ENCODE measurements at regions of chr5 and their contacts with region 1.

Region 1: DNA sequence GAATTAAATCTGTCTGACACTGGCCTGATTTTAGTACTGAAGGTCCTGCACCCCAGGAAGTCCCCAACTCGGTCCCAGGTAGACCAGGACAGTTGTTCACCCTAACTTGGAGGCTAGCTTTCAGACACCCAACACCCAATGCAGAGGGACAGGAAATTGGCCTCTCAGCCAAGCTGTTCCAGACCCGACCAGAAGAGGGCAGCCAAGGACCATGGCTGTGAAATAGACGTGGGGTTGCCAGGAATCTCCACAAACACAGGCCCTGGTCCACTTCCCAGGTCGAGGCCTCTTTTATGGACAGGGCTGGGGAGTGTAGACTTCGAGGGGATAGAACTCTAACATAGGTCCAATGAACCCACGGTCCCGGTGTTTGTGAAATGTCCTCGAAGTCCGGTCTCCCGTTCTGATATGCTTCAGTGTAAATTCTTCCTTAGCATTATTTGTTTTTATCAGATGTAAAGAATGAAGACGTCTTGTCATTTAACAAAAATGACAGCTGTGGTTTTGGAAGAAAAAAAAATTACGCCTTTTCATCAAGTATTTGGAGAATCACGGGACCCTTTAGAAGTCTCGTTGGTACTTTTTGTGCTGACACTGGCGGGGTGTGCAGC is 260.3 kb upstream of the ADAMTS16 start:
- DNase-seq: peak; percentile 78
- H3K4me3 Mint-ChIP-seq: no peak overlapping the region
- H3K27ac Mint-ChIP-seq: no peak overlapping the region
- H3K4me1 Mint-ChIP-seq: no peaks in the 10 kb centered on the region
- H3K27me3 Mint-ChIP-seq: peaks cover 9% of the 10 kb centered on the region
- CTCF ChIP-seq: peak; percentile 93

Region 2: GRCh38 chr5:4479426-4479825 is 400.4 kb before region 1 on chr5:
- CTCF ChIA-PET with region 1: no interaction called
- POLR2A ChIA-PET with region 1: no interaction called
- intact Hi-C with region 1: no loop called
- DNase-seq: no peak
- H3K4me3 Mint-ChIP-seq: no peak overlapping the region
- H3K27ac Mint-ChIP-seq: no peak overlapping the region
- H3K4me1 Mint-ChIP-seq: no peaks in the 10 kb centered on the region
- H3K27me3 Mint-ChIP-seq: no peaks in the 10 kb centered on the region
- CTCF ChIP-seq: no peak

Region 3: GRCh38 chr5:4941957-4942830 is 62.4 kb after region 1 on chr5:
- CTCF ChIA-PET with region 1: interaction called, 11 read pairs
- POLR2A ChIA-PET with region 1: no interaction called
- intact Hi-C with region 1: loop called (anchors 5 kb)
- DNase-seq: peak; percentile 14
- H3K4me3 Mint-ChIP-seq: no peak overlapping the region
- H3K27ac Mint-ChIP-seq: no peak overlapping the region
- H3K4me1 Mint-ChIP-seq: no peaks in the 10 kb centered on the region
- H3K27me3 Mint-ChIP-seq: no peaks in the 10 kb centered on the region
- CTCF ChIP-seq: peak; percentile 93

Region 4: GRCh38 chr5:5063533-5063953 is 183.7 kb after region 1 on chr5:
- CTCF ChIA-PET with region 1: interaction called, 4 read pairs
- POLR2A ChIA-PET with region 1: no interaction called
- intact Hi-C with region 1: loop called (anchors 5 kb)
- DNase-seq: peak; percentile 33
- H3K4me3 Mint-ChIP-seq: no peak overlapping the region
- H3K27ac Mint-ChIP-seq: no peak overlapping the region
- H3K4me1 Mint-ChIP-seq: peaks cover 8% of the 10 kb centered on the region
- H3K27me3 Mint-ChIP-seq: peaks cover 11% of the 10 kb centered on the region
- CTCF ChIP-seq: no peak

Region 5: DNA sequence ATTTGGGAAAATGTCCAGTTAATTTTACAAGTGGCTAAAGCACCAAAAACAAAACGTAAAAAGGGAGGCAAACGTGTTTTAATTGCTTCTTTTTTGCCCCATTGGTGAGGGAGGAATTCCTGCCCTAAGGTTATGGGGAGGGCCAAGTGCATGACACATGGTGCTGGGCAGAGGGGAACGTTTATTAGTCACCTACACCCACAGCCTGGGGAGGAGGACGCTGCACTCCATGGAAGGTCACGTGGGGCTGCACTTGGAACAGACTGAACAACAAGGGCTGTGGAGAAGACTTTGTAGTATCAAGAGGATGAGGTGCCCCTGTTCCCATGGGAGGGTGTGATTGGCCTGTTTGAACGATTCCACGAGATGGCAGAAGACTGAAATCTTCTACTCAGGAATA is 246.6 kb after region 1 on chr5:
- CTCF ChIA-PET with region 1: interaction called, 6 read pairs
- POLR2A ChIA-PET with region 1: no interaction called
- intact Hi-C with region 1: loop called (anchors 5 kb)
- DNase-seq: peak; percentile 95
- H3K4me3 Mint-ChIP-seq: no peak overlapping the region
- H3K27ac Mint-ChIP-seq: peak overlapping the region; percentile 46
- H3K4me1 Mint-ChIP-seq: peaks cover 12% of the 10 kb centered on the region
- H3K27me3 Mint-ChIP-seq: no peaks in the 10 kb centered on the region
- CTCF ChIP-seq: no peak

Region 6: GRCh38 chr5:5141625-5142532 is 262.1 kb after region 1 on chr5:
- CTCF ChIA-PET with region 1: interaction called, 6 read pairs
- POLR2A ChIA-PET with region 1: no interaction called
- intact Hi-C with region 1: loop called (anchors 1 kb)
- DNase-seq: peak; percentile 74
- H3K4me3 Mint-ChIP-seq: no peak overlapping the region
- H3K27ac Mint-ChIP-seq: no peak overlapping the region
- H3K4me1 Mint-ChIP-seq: no peaks in the 10 kb centered on the region
- H3K27me3 Mint-ChIP-seq: peaks cover 16% of the 10 kb centered on the region
- CTCF ChIP-seq: peak; percentile 78

Region 7: GRCh38 chr5:5340206-5340729 is 460.5 kb after region 1 on chr5:
- CTCF ChIA-PET with region 1: interaction called, 5 read pairs
- POLR2A ChIA-PET with region 1: no interaction called
- intact Hi-C with region 1: loop called (anchors 2 kb)
- DNase-seq: peak; percentile 97
- H3K4me3 Mint-ChIP-seq: peak overlapping the region; percentile 32
- H3K27ac Mint-ChIP-seq: peak overlapping the region; percentile 40
- H3K4me1 Mint-ChIP-seq: peaks cover 50% of the 10 kb centered on the region
- H3K27me3 Mint-ChIP-seq: no peaks in the 10 kb centered on the region
- CTCF ChIP-seq: peak; percentile 59

Region 8: GRCh38 chr5:5398046-5398445 is 518.2 kb after region 1 on chr5:
- CTCF ChIA-PET with region 1: interaction called, 15 read pairs
- POLR2A ChIA-PET with region 1: no interaction called
- intact Hi-C with region 1: loop called (anchors 1 kb)
- DNase-seq: peak; percentile 23
- H3K4me3 Mint-ChIP-seq: no peak overlapping the region
- H3K27ac Mint-ChIP-seq: no peak overlapping the region
- H3K4me1 Mint-ChIP-seq: peaks cover 7% of the 10 kb centered on the region
- H3K27me3 Mint-ChIP-seq: no peaks in the 10 kb centered on the region
- CTCF ChIP-seq: no peak